ENCODE measurements at regions of chr3 and their contacts with region 1.

Region 1: GRCh38 chr3:44529927-44530326 is 25.1 kb upstream of the ZKSCAN7 start:
- DNase-seq: no peak
- H3K4me3 ChIP-seq: no peak overlapping the region
- H3K4me1 ChIP-seq: no peaks in the 10 kb centered on the region
- H3K27me3 ChIP-seq: no peaks in the 10 kb centered on the region

Region 2: DNA sequence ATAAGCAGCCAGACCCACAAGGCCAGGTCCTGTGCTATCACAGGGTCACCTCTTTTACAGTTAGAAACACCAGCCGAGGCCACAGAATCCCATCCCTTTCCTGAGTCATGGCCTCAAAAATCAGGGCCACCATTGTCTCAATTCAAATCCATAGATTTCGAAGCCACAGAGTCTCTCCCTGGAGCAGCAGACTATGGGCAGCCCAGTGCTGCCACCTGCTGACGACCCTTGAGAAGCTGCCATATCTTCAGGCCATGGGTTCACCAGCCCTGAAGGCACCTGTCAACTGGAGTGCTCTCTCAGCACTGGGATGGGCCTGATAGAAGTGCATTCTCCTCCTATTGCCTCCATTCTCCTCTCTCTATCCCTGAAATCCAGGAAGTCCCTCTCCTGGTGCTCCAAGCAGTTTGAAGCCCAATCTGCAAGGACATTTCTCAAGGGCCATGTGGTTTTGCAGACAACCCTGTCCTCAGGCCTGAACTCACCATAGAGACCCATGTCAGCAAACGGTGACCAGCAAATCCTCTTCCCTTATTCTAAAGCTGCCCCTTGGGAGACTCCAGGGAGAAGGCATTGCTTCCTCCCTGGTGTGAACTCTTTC is 384.0 kb after region 1 on chr3:
- in situ Hi-C with region 1: loop called (anchors 10 kb)
- DNase-seq: peak; percentile 60 to 80
- H3K4me3 ChIP-seq: no peak overlapping the region
- H3K4me1 ChIP-seq: no peaks in the 10 kb centered on the region
- H3K27me3 ChIP-seq: peaks cover 2% of the 10 kb centered on the region